K562 (cell line): ENCODE measurements at regions of chr3 and their contacts with region 1.

Region 1: GRCh38 chr3:193788189-193788991 is 195.4 kb downstream of the OPA1 start:
- DNase-seq: peak; percentile 83 to 89 (median 85)
- ATAC-seq: peak; percentile 99
- H3K4me3 ChIP-seq: no peak overlapping the region
- H3K27ac ChIP-seq: no peak overlapping the region
- H3K4me1 ChIP-seq: peaks cover 10 to 13% of the 10 kb centered on the region in 2 experiments; a peak in 3 of 5 replicates
- H3K27me3 ChIP-seq: no peaks in the 10 kb centered on the region
- CTCF ChIP-seq: peak; percentile 86 to 95 (median 93)
- EP300 ChIP-seq: peak; percentile 59
- POLR2A ChIP-seq: no peak
- RAD21 ChIP-seq: peak; percentile 95 to 96

Region 2: GRCh38 chr3:193851941-193852674 is 63.7 kb after region 1 on chr3:
- CTCF ChIA-PET with region 1: no interaction called
- POLR2A ChIA-PET with region 1: no interaction called
- in situ Hi-C with region 1: no loop called
- intact Hi-C with region 1: loop called (anchors 2 kb)
- DNase-seq: no peak
- ATAC-seq: no peak; the same call in 1 of the 3 replicates
- H3K4me3 ChIP-seq: no peak overlapping the region
- H3K27ac ChIP-seq: peak overlapping the region; percentile 59
- H3K4me1 ChIP-seq: peaks cover 11 to 53% of the 10 kb centered on the region in 2 experiments; a peak in 4 of 5 replicates
- H3K27me3 ChIP-seq: no peaks in the 10 kb centered on the region
- CTCF ChIP-seq: no peak
- EP300 ChIP-seq: no peak
- POLR2A ChIP-seq: no peak
- RAD21 ChIP-seq: no peak

Region 3: GRCh38 chr3:193928354-193929209 is 140.2 kb after region 1 on chr3:
- CTCF ChIA-PET with region 1: no interaction called
- POLR2A ChIA-PET with region 1: no interaction called
- in situ Hi-C with region 1: no loop called
- intact Hi-C with region 1: loop called (anchors 5 kb)
- DNase-seq: peak; percentile 37 to 77 (median 42)
- ATAC-seq: peak; percentile 85
- H3K4me3 ChIP-seq: no peak overlapping the region
- H3K27ac ChIP-seq: peak overlapping the region; percentile 67
- H3K4me1 ChIP-seq: peaks cover 16 to 43% of the 10 kb centered on the region in 2 experiments
- H3K27me3 ChIP-seq: no peaks in the 10 kb centered on the region
- CTCF ChIP-seq: no peak
- EP300 ChIP-seq: peak; percentile 91
- POLR2A ChIP-seq: no peak
- RAD21 ChIP-seq: no peak

Region 4: DNA sequence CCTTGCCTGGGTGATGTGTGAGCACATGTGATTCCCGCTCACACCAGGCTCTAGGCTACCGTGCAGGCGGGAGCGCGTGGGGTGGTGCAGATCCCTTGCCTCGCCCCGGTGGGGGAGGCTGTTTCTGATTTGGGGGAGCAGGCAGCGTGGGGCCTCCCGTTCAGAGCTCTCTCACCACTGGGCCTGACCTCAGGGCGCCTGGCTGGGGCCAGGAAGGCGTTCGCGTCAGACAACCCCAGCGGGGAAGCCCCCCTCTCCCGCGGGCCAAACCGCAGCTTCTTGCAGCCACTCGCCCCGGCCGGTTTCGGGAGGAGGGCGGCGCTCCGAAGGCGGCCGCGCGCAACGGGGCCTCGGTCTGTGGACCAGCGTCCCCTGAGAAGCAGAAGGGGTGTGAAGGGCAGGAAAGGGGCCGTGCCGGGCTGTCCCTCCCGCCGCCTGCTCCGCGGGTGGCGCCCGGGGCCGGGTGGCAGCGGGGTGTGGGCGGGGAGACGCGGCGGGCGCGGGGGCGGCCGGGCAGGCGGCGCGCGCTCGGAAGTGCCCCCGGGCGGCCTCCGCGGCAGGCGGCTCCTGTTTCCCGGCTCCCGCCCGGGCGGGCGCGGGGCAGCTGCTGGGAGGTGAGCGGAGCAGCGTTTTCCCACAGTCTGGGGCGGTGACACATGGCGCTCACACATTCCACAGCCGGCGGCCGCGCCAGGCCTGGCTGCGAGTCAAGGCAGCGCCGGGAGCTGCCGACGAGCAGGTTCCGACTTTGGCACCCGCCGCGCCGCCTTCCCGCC is 282.4 kb after region 1 on chr3:
- CTCF ChIA-PET with region 1: no interaction called
- POLR2A ChIA-PET with region 1: no interaction called
- in situ Hi-C with region 1: no loop called
- intact Hi-C with region 1: loop called (anchors 10 kb)
- DNase-seq: peak; percentile 72 to 93 (median 87)
- ATAC-seq: peak; percentile 89
- H3K4me3 ChIP-seq: peak overlapping the region; percentile 48
- H3K27ac ChIP-seq: peak overlapping the region; percentile 79; the same call in 2 of the 3 replicates
- H3K4me1 ChIP-seq: peaks cover 21% of the 10 kb centered on the region in 2 experiments
- H3K27me3 ChIP-seq: no peaks in the 10 kb centered on the region
- CTCF ChIP-seq: no peak
- EP300 ChIP-seq: no peak
- POLR2A ChIP-seq: peak; percentile 61; the same call in 1 of the 2 replicates
- RAD21 ChIP-seq: peak in 1 of 2 experiments; percentile 13; a peak in 1 of 4 replicates

Region 5: DNA sequence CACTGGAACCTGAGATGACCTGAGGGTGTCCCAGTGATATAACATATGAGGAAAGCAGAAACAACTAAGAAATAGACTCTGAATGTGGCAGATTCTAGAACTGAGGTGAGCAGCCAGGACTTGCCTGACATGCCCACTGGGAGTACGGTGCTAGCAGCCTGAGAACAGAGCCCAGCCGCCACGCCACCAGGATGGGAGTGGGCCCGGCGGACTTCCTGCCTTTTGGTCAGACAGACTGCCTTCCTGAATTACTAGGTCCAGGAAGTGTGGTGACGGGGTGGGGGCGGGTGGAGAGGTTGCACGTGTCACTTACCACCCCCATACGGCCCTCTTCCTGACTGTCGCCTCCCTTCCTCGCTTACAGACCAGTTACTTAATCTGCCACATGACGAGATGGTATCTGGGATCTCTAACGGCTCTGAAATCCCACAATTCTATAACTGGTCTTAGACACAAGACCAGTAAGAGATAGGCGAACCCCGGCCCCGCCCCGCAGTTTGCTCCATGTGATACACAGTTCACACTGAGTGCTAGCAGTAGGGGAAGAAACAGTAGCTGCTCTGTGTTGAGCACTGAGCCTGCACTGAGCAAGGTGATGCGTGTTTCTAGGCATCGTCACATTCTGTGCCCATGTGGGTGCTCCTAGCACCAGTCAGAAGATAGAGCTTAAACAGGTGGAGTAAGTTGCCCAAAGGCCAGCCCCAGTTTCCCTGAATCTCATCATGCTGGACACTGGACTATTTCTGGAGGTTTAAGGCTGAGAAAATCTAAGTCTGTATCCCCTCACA is 467.1 kb after region 1 on chr3:
- CTCF ChIA-PET with region 1: interaction called, 3 read pairs
- POLR2A ChIA-PET with region 1: no interaction called
- in situ Hi-C with region 1: no loop called
- intact Hi-C with region 1: loop called (anchors 5 kb)
- DNase-seq: peak; percentile 92 to 98 (median 94)
- ATAC-seq: peak; percentile 96
- H3K4me3 ChIP-seq: peak overlapping the region; percentile 26
- H3K27ac ChIP-seq: peak overlapping the region; percentile 98
- H3K4me1 ChIP-seq: peaks cover 42 to 48% of the 10 kb centered on the region in 2 experiments
- H3K27me3 ChIP-seq: no peaks in the 10 kb centered on the region; a peak in 1 of 5 replicates
- CTCF ChIP-seq: no peak
- EP300 ChIP-seq: peak; percentile 100
- POLR2A ChIP-seq: peak; percentile 88
- RAD21 ChIP-seq: peak in 1 of 2 experiments; percentile 34; a peak in 3 of 4 replicates